Activated CD4-positive, alpha-beta T cell treated with anti-CD3 and anti-CD28 coated beads for 36 hours (primary cell): ENCODE measurements at regions of chr5 and their contacts with region 1.

Region 1: DNA sequence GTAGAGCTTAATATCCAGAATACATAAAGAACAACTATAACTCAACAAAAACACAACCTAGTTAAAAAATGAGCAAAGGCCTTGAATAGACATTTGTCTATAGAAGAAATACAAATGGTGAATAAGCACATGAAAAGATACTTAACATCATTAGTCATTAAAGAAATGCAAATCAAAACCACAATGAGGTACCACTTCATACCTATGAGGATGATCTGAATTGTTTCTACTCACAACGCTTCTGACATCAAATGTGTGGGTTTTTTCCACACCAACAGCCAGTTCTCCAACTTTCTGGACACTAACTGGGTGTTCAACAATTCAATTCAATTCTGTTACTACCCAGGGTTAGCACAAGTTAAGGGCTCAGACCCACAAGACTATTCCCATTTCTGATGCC is 22.0 kb downstream of the SREK1IP1 start:
- DNase-seq: no peak
- ATAC-seq: peak; percentile 19
- H3K4me3 Mint-ChIP-seq: no peak overlapping the region
- H3K27ac Mint-ChIP-seq: no peak overlapping the region
- H3K4me1 Mint-ChIP-seq: peaks cover 12% of the 10 kb centered on the region
- H3K27me3 Mint-ChIP-seq: no peaks in the 10 kb centered on the region

Region 2: GRCh38 chr5:64700765-64701164 is 45.7 kb before region 1 on chr5:
- CTCF ChIA-PET with region 1: no interaction called
- POLR2A ChIA-PET with region 1: no interaction called
- intact Hi-C with region 1: no loop called
- DNase-seq: no peak
- ATAC-seq: no peak
- H3K4me3 Mint-ChIP-seq: no peak overlapping the region
- H3K27ac Mint-ChIP-seq: no peak overlapping the region
- H3K4me1 Mint-ChIP-seq: no peaks in the 10 kb centered on the region
- H3K27me3 Mint-ChIP-seq: peaks cover 16% of the 10 kb centered on the region

Region 3: GRCh38 chr5:64775291-64775690 is 28.8 kb after region 1 on chr5:
- CTCF ChIA-PET with region 1: no interaction called
- POLR2A ChIA-PET with region 1: no interaction called
- intact Hi-C with region 1: loop called in 1 of 2 experiments (anchors 2 kb)
- DNase-seq: no peak
- ATAC-seq: no peak
- H3K4me3 Mint-ChIP-seq: no peak overlapping the region
- H3K27ac Mint-ChIP-seq: no peak overlapping the region
- H3K4me1 Mint-ChIP-seq: peaks cover 25% of the 10 kb centered on the region
- H3K27me3 Mint-ChIP-seq: no peaks in the 10 kb centered on the region

Region 4: DNA sequence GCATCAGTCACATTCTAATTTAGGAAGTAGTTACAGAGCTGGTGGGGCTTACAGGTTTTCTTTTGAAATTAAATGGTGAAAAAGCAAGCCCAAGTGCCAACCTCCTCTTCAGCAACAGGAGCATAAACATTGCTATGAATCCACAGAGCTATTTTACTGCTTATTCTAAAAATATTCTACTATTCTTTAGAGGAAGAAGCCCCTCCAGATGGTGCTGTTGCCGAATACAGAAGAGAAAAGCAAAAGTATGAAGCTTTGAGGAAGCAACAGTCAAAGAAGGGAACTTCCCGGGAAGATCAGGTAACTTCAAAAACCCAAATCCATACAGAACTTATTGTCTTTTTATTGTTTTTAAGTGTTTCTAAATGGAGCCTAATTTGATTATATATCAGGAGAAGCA is 225.1 kb after region 1 on chr5:
- CTCF ChIA-PET with region 1: no interaction called
- POLR2A ChIA-PET with region 1: no interaction called
- intact Hi-C with region 1: no loop called
- DNase-seq: no peak
- ATAC-seq: no peak
- H3K4me3 Mint-ChIP-seq: no peak overlapping the region
- H3K27ac Mint-ChIP-seq: no peak overlapping the region
- H3K4me1 Mint-ChIP-seq: no peaks in the 10 kb centered on the region
- H3K27me3 Mint-ChIP-seq: no peaks in the 10 kb centered on the region